ENCODE measurements at regions of chr19 and their contacts with region 1.

Region 1: DNA sequence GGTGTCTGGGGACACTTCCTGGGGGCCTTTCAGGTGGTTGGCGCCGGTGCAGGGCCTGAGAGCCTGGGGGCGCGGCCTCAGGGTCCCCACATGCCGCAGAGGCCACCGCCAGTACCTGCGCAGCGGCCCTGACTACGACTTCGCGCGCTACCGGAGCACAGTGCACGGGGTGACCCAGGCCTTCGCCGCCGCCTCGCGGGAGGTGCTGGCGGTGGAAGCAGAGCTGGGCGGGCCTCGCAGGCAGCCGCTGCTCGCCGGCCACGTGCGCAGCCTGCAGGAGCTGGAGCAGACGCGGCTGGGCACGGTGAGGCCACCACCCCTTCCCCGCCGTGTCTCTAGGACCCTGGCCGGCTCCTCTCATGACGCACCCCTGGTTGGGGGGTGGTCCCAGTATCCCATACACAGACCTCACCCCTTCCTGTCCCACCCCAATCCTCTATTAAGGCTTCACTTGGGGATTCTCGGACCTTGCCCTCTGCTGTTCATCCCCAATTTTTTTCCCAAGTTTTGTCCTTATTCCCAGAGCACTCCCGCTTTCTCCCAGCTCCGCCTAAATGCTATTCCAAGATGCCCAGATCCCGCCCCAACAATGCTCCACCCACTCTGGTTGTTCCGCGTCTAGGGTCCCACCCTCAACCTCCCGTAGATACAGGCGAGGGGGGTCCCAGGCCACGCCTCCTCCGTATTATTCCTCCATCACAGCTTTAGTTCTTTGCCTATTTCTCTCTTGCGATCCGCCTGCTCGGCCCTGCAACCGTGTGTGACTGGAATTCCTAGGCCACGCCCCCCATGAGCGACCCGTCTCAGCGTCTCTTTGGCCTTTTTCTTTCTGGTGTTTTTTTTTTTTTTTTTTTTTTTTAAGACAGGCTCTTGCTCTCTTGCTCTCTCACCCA is 1.0 kb downstream of the REX1BD start:
- DNase-seq: peak; percentile 60 to 92 (median 66)
- ATAC-seq: peak; percentile 78
- H3K4me3 ChIP-seq: peak overlapping the region; percentile 77 to 79
- H3K27ac ChIP-seq: peak overlapping the region; percentile 88 to 97
- H3K4me1 ChIP-seq: peaks cover 11 to 37% of the 10 kb centered on the region in 2 donors
- H3K27me3 ChIP-seq: peaks cover 0 to 12% of the 10 kb centered on the region in 2 donors
- CTCF ChIP-seq: peak in 1 of 2 donors; percentile 20

Region 2: GRCh38 chr19:18542936-18543815 is 46.5 kb before region 1 on chr19 and contains the start of gene FKBP8:
- intact Hi-C with region 1: no loop called
- DNase-seq: peak; percentile 86 to 96 (median 95)
- ATAC-seq: peak; percentile 99
- H3K4me3 ChIP-seq: peak within 1 kb of the TSS; percentile 31 to 49
- H3K27ac ChIP-seq: peak within 1 kb of the TSS; percentile 79 to 89
- H3K4me1 ChIP-seq: peaks cover 0 to 27% of the 10 kb centered on the region in 2 donors
- H3K27me3 ChIP-seq: no peaks in the 10 kb centered on the region
- CTCF ChIP-seq: no peak
- polyA plus RNA-seq, gene FKBP8: 191 to 232 (median 218) TPM

Region 3: GRCh38 chr19:18626911-18627310 is 37.3 kb after region 1 on chr19:
- intact Hi-C with region 1: no loop called
- DNase-seq: no peak
- ATAC-seq: no peak
- H3K4me3 ChIP-seq: no peak overlapping the region
- H3K27ac ChIP-seq: no peak overlapping the region
- H3K4me1 ChIP-seq: no peaks in the 10 kb centered on the region
- H3K27me3 ChIP-seq: peaks cover 0 to 6% of the 10 kb centered on the region in 2 donors
- CTCF ChIP-seq: no peak

Region 4: GRCh38 chr19:18672606-18673337 is 83.1 kb after region 1 on chr19:
- intact Hi-C with region 1: loop called in 1 of 2 experiments (anchors 10 kb)
- DNase-seq: no peak
- ATAC-seq: no peak
- H3K4me3 ChIP-seq: no peak overlapping the region
- H3K27ac ChIP-seq: no peak overlapping the region
- H3K4me1 ChIP-seq: peaks cover 5 to 6% of the 10 kb centered on the region in 2 donors
- H3K27me3 ChIP-seq: no peaks in the 10 kb centered on the region
- CTCF ChIP-seq: no peak

Region 5: DNA sequence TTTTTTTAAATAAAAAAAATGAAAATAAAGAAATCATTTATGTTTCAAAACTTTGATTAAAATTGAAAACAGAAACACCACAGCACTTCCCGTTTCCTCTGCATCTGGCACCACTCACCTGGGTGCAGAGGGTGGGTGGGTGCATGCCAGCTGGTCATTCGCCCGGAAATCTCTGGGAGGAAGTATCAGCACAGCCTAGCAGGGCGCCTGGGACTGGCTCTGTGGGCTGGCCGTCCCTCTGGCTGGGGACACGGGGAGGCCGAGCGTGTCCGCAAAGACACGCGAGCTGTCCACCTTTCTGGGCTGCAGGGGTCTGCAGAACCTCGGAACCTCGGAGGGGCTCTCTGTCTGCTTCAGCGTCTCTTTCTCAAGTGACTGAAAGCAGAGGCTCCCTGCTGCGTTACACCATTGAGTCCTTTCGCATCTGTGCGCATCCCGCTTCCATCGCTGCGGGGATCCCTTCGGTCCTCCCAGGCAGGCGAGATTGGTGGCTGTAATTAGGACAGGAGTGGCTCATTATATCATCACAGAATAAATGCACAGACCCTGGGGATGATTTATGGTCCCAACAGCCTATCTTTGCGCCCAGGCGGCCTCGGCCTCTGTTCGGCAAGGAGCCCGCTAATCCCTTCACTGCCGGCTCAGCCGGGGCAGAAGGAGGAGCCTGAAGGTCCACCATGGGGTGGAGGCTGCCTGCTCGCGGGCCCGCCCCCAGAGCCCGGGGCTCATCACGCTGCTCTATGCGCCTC is 111.0 kb after region 1 on chr19:
- intact Hi-C with region 1: no loop called
- DNase-seq: peak; percentile 29 to 88 (median 64)
- ATAC-seq: peak; percentile 87
- H3K4me3 ChIP-seq: peak overlapping the region; percentile 13 to 32
- H3K27ac ChIP-seq: peak overlapping the region in 1 of 2 donors; percentile 53
- H3K4me1 ChIP-seq: peaks cover 12 to 21% of the 10 kb centered on the region in 2 donors
- H3K27me3 ChIP-seq: no peaks in the 10 kb centered on the region
- CTCF ChIP-seq: no peak

Measured in left lung (tissue), 14 donors.